ENCODE measurements at regions of chr3 and their contacts with region 1.

Region 1: GRCh38 chr3:168047190-168047795 is 48.4 kb downstream of the GOLIM4 start:
- DNase-seq: no peak
- H3K4me3 ChIP-seq: no peak overlapping the region
- H3K27ac ChIP-seq: no peak overlapping the region
- H3K4me1 ChIP-seq: peaks cover 26 to 46% (median 31%) of the 10 kb centered on the region in 4 donors
- H3K27me3 ChIP-seq: no peaks in the 10 kb centered on the region
- CTCF ChIP-seq: peak; percentile 69 to 94 (median 76)
- EP300 ChIP-seq: no peak
- POLR2A ChIP-seq: no peak

Region 2: DNA sequence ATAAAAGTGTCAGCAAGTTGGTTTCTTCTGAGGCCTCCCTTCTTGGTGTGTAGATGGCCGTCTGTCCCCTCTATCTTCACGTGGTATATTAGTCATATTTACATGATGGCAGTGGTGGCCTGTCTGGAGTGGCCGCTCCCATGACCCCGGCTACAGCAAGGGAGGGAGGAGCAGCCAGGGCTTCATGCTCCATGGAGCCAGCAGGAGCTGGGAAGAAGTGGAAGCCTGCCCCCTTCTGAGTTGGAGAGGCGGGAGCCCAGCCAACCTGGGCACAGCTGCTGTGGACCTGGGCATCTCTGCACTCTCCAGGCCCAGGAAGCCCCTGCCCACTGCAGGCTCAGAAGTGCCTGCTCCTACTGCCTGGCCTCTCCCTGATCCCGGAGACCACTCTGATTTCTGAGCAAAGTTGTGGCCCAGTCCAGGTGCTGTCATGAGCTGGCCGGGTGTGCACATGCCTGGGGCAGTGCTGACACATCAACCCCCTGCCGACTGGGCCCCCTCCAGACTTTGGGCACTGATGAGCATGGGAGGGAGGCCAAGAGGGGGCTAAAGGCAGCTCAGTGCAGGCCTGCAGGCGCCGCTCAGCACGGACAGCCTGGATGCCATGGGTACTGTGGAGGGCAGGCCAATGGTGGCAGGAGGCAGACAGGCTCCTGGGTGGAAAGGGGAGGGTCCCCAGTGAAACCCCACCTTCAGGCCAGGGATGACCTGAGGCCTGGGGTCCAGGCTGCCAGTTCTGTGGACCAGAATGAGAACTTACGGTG is 227.0 kb before region 1 on chr3:
- in situ Hi-C with region 1: no loop called
- intact Hi-C with region 1: no loop called
- DNase-seq: no peak
- H3K4me3 ChIP-seq: no peak overlapping the region
- H3K27ac ChIP-seq: no peak overlapping the region
- H3K4me1 ChIP-seq: no peaks in the 10 kb centered on the region
- H3K27me3 ChIP-seq: no peaks in the 10 kb centered on the region
- CTCF ChIP-seq: no peak
- EP300 ChIP-seq: no peak
- POLR2A ChIP-seq: no peak

Region 3: DNA sequence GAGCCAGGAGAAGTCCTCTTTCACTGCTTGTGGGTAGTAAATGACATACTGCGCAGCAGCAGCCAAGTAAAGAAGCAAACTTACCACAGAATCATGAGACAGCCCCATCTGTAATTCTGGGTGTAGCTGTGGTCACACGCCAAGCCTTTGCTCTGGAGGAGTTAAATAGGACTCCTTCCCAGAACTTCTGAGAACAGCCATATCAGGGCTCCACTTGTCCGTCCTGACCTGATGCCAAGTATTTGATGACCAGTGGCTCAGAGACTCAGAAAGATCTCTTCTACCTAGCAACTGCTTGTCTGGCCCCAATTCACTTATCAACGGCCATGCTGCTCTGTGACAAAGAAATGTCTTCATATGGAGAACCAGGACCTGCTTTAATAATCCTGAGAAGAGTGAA is 69.0 kb after region 1 on chr3:
- in situ Hi-C with region 1: no loop called
- intact Hi-C with region 1: loop called (anchors 10 kb)
- DNase-seq: peak; percentile 18
- H3K4me3 ChIP-seq: no peak overlapping the region
- H3K27ac ChIP-seq: peak overlapping the region in 3 of 4 donors; percentile 47 to 63 (median 63)
- H3K4me1 ChIP-seq: peaks cover 4 to 32% (median 17%) of the 10 kb centered on the region in 4 donors
- H3K27me3 ChIP-seq: no peaks in the 10 kb centered on the region
- CTCF ChIP-seq: no peak
- EP300 ChIP-seq: no peak
- POLR2A ChIP-seq: no peak

Measured in transverse colon (tissue), 4 donors.